Adrenal gland (tissue), 19 donors: ENCODE measurements at regions of chr10 and their contacts with region 1.

Region 1: GRCh38 chr10:88944813-88945212 is 7.8 kb downstream of the ACTA2 start:
- DNase-seq: no peak
- H3K4me3 ChIP-seq: no peak overlapping the region
- H3K27ac ChIP-seq: no peak overlapping the region
- H3K4me1 ChIP-seq: peaks cover 0 to 6% of the 10 kb centered on the region in 2 donors
- H3K27me3 ChIP-seq: no peaks in the 10 kb centered on the region
- CTCF ChIP-seq: no peak
- POLR2A ChIP-seq: no peak

Region 2: DNA sequence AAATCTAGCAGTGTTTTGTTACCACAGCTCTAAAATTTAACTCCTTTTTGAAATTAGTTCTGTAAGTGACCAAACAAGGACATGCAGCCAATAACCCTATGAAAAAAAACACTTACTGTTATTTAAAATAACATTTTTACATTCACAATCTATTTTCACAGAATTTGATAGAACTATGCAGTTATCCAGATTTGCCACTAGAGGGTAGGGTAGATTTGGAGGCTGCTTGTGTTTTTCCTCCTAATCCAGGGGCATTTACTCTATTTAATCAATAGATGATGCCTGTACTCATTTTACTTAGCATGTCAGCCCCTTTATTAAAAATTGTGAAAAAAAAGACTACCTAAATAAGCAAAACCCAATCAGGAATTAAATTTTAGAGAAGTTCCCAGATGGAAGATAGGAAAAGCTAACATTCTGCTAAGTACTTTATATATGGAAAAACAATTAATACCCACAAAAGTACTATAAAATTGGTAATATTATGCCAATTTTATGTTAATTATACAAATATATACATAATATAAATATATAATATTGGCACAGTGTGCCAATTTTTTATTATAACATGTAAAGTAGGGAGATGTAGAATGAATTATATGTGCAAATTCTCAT is 256.9 kb before region 1 on chr10:
- intact Hi-C with region 1: no loop called
- DNase-seq: no peak
- H3K4me3 ChIP-seq: no peak overlapping the region
- H3K27ac ChIP-seq: no peak overlapping the region
- H3K4me1 ChIP-seq: no peaks in the 10 kb centered on the region
- H3K27me3 ChIP-seq: no peaks in the 10 kb centered on the region
- CTCF ChIP-seq: peak; percentile 57 to 78 (median 68)
- POLR2A ChIP-seq: no peak

Region 3: DNA sequence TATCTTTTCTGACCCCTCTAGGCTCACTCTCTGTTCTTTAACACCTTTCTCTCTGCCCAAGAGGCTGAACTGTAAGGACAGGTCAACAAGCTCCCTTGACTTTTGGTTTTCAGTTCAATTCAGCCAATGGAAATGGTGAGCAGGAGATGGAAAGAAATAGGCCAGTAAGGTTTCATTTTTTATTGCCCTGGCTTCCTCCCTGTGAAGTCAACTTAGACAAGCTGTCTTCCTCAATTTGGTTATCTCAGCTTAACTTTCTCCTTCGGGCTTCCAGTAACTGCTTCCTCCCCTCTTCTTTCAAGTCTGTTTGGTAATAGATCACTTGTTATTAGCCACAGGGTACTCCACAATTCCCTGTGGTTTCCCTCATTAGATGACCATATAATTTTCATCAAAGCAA is 219.0 kb before region 1 on chr10:
- intact Hi-C with region 1: no loop called
- DNase-seq: no peak
- H3K4me3 ChIP-seq: no peak overlapping the region
- H3K27ac ChIP-seq: no peak overlapping the region
- H3K4me1 ChIP-seq: no peaks in the 10 kb centered on the region
- H3K27me3 ChIP-seq: no peaks in the 10 kb centered on the region
- CTCF ChIP-seq: no peak
- POLR2A ChIP-seq: no peak

Region 4: DNA sequence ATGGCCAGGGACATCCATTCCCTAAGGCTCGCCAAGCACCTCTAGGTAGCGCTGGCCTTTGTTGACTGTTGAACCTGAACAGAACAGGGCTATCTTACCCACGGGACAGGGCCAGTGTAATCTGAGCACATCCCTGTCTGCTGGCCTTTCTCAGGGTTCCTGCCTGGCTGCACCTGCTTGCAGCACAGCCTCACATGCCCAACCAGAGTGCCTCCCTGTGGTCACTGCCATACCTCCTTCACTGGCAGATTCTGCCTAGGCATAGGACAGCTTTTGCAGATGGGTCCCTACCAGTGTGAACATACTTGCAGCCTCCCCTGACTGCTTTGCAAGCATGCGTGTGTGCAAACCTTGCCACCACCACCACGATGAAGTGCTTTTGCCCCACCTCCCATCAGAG is 200.8 kb before region 1 on chr10:
- intact Hi-C with region 1: no loop called
- DNase-seq: no peak
- H3K4me3 ChIP-seq: no peak overlapping the region
- H3K27ac ChIP-seq: no peak overlapping the region
- H3K4me1 ChIP-seq: no peaks in the 10 kb centered on the region
- H3K27me3 ChIP-seq: peaks cover 11% of the 10 kb centered on the region
- CTCF ChIP-seq: no peak
- POLR2A ChIP-seq: no peak

Region 5: DNA sequence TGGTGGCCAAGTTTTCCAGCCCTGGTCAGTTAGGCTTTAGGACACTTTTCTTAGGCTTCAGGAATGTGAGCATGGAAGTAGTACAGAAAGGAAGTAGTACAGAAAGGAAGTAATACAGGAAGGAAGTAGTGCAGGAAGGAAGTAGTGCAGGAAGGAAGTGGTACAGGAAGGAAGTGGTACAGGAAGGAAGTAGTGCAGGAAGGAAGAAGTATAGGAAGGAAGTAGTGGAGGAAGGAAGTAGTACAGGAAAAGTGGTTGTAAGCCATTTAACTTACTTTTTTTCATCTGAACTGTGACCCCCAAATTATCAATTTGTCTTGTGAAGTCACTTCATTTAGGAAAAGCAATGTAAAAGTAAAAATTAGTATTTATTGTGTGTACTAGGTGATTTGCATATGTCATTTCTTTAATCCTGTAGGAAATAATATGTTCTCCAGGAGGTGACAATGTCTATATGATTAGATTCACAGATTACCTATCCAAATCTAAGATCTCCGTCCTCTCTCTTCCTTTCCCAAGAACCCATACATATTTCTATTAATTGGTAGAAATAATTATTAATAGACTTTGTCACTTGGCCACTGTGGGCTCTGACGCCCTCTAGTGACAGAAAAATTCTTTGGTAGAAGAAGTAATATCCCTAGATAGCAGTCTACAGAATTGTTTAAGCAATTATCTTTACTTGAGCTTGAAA is 41.9 kb after region 1 on chr10:
- intact Hi-C with region 1: loop called (anchors 2 to 5 kb)
- DNase-seq: peak in 5 of 7 donors; percentile 29 to 51 (median 44)
- H3K4me3 ChIP-seq: no peak overlapping the region
- H3K27ac ChIP-seq: peak overlapping the region in 1 of 5 donors; percentile 17
- H3K4me1 ChIP-seq: peaks cover 5 to 42% of the 10 kb centered on the region in 2 donors
- H3K27me3 ChIP-seq: no peaks in the 10 kb centered on the region
- CTCF ChIP-seq: peak; percentile 66 to 93 (median 85)
- POLR2A ChIP-seq: no peak